ENCODE measurements at regions of chr1 and their contacts with region 1.

Region 1: GRCh38 chr1:159924981-159925712 is at the start of gene TAGLN2:
- DNase-seq: peak; percentile 91 to 95
- H3K4me3 ChIP-seq: peak within 1 kb of the TSS; percentile 86 to 99
- H3K27ac ChIP-seq: peak within 1 kb of the TSS; percentile 94 to 97
- H3K4me1 ChIP-seq: peaks cover 0 to 42% (median 31%) of the 10 kb centered on the region in 4 donors
- H3K27me3 ChIP-seq: no peaks in the 10 kb centered on the region
- CTCF ChIP-seq: no peak

Region 2: GRCh38 chr1:159854693-159855192 is 70.4 kb before region 1 on chr1:
- intact Hi-C with region 1: loop called (anchors 10 kb)
- DNase-seq: peak; percentile 82 to 92
- H3K4me3 ChIP-seq: peak overlapping the region; percentile 72 to 74
- H3K27ac ChIP-seq: peak overlapping the region; percentile 94 to 96
- H3K4me1 ChIP-seq: peaks cover 0 to 19% (median 11%) of the 10 kb centered on the region in 4 donors
- H3K27me3 ChIP-seq: no peaks in the 10 kb centered on the region
- CTCF ChIP-seq: no peak

Region 3: DNA sequence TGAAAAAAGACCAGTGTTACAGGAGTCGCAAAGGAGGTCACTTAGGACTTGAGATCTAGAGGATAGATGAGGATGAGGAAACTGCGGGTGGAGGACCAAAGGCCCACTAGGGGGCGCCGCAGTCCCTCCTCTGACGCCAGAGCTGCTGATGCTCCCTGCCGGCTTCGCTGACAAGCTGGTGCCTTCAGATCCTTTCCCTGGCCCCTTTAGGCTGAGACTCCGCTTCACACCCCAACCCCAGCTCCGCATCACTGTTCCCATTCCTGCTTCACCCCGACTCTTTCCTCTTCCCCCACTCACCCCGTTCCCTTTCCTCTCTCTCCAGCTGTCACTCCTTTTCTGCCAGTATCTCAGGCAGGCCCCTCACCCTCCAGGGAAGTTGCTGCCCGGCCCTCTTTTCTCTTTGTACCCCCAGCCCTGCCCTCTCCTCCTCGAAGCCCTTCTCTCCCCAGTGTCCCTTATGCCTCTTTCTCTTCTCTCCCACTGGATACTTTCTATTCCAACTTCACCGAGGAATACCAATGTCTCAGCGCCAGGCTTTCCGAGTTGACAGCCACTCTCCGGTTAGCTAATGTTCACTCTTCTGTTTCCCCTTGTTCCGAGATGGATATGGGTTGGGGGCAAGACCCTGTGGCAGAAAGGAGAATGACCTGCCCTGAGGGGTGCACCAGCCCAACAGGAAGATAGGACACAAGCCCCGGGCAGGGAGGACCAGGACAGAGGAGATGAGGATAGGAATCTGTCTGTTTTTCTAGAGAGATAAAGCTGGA is 160.7 kb after region 1 on chr1:
- intact Hi-C with region 1: loop called (anchors 5 kb)
- DNase-seq: peak; percentile 83 to 95
- H3K4me3 ChIP-seq: peak overlapping the region in 1 of 2 donors; percentile 4
- H3K27ac ChIP-seq: peak overlapping the region; percentile 77 to 84
- H3K4me1 ChIP-seq: peaks cover 0 to 45% (median 35%) of the 10 kb centered on the region in 4 donors
- H3K27me3 ChIP-seq: peaks cover 0 to 6% of the 10 kb centered on the region in 2 donors
- CTCF ChIP-seq: peak; percentile 76 to 91